GM10248 (cell line): ENCODE measurements at regions of chr4 and their contacts with region 1.

Region 1: GRCh38 chr4:185039508-185040273 is 21.4 kb downstream of the HELT start:
- DNase-seq: peak; percentile 76
- CTCF ChIP-seq: peak; percentile 70

Region 2: GRCh38 chr4:185020863-185021761 is 18.6 kb before region 1 on chr4:
- CTCF ChIA-PET with region 1: interaction called, 40 read pairs
- POLR2A ChIA-PET with region 1: no interaction called
- DNase-seq: no peak
- CTCF ChIP-seq: no peak

Region 3: GRCh38 chr4:185054876-185055275 is 15.2 kb after region 1 on chr4:
- CTCF ChIA-PET with region 1: interaction called, 33 read pairs
- POLR2A ChIA-PET with region 1: no interaction called
- DNase-seq: no peak
- CTCF ChIP-seq: no peak

Region 4: GRCh38 chr4:185082561-185082960 is 42.9 kb after region 1 on chr4:
- CTCF ChIA-PET with region 1: interaction called, 13 read pairs
- POLR2A ChIA-PET with region 1: no interaction called
- DNase-seq: no peak
- CTCF ChIP-seq: no peak

Region 5: GRCh38 chr4:185096032-185096653 is 56.5 kb after region 1 on chr4:
- CTCF ChIA-PET with region 1: interaction called, 22 read pairs
- POLR2A ChIA-PET with region 1: no interaction called
- DNase-seq: peak; percentile 38
- CTCF ChIP-seq: peak; percentile 58

Region 6: GRCh38 chr4:185134307-185134869 is 94.7 kb after region 1 on chr4:
- CTCF ChIA-PET with region 1: interaction called, 70 read pairs
- POLR2A ChIA-PET with region 1: no interaction called
- DNase-seq: peak; percentile 69
- CTCF ChIP-seq: peak; percentile 72

Region 7: DNA sequence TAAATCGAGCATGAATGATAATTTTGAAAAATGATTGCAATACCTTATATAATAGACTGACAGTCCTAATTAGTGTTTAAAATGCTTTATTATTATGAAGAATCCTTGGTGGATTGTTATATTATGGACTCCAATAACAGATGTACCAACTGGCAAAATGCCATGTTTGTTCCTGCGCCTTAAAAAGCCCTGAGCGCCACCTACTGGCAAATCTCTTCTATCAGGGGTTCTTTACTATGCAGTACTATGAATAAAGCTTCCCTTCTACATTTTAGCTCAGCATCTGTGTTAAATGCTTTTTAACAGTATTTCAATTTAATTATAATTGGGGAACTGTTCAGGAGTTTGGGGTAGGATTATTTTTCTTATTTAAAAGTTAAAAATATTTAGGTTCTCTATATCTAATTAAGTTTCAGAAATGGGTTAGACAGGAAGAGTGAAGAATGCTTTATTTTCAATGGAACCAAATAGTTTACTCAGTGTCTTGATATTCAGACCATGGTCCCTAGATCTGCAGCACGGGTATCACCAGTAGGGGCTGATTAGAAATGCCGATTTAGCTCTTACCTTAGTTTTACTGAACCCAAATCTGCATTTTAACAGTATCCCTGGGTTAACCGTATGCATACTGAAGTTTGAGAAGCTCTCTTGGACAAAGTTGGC is 144.1 kb after region 1 on chr4:
- CTCF ChIA-PET with region 1: interaction called, 73 read pairs
- POLR2A ChIA-PET with region 1: no interaction called
- DNase-seq: peak; percentile 61
- CTCF ChIP-seq: peak; percentile 67